CD4-positive, alpha-beta T cell (primary cell): ENCODE measurements at regions of chr2 and their contacts with region 1.

Region 1: DNA sequence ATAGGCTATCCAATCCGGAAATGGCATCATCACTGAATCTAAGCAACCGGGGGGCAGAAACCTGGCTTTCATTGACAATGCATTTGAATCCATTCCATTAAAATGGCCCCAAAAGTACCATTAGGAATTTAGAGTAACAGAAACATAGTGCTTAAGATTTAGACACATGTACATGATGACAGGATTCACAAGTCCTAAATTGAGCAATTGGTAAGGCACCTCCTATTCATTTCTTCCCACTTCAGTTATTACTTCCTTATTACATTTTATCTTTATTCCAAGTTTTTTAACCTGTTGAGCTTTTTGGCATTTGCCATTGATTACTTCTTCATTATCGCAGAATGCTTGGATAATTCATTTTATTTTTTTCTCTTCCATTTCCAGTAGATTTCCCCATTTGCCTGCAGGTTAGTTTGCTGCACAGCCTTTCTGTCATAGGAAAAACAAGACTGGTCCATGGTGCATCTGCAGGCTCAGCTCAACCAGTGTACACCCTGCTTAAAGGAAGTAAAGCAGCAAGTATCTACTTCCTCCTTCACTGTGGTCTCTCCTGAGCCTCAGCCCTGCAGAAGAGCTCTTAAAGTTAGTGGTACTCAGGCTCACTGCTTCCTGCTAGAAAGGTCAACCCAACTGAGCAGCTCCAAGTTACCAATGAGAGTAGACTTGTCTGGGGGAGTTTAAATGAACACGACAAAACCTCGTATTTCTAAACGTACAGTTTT is 89.2 kb downstream of the DOCK10 start:
- DNase-seq: peak in 13 of 14 experiments; percentile 17 to 81 (median 34)
- ATAC-seq: peak; percentile 95
- H3K4me3 ChIP-seq: no peak overlapping the region
- H3K4me3 Mint-ChIP-seq: peak overlapping the region; percentile 50
- H3K27ac ChIP-seq: peak overlapping the region; percentile 51 to 57
- H3K27ac Mint-ChIP-seq: peak overlapping the region; percentile 84
- H3K4me1 ChIP-seq: peaks cover 47% of the 10 kb centered on the region
- H3K4me1 Mint-ChIP-seq: peaks cover 88% of the 10 kb centered on the region
- H3K27me3 ChIP-seq: no peaks in the 10 kb centered on the region
- H3K27me3 Mint-ChIP-seq: no peaks in the 10 kb centered on the region
- CTCF ChIP-seq: no peak

Region 2: GRCh38 chr2:224217962-224218347 is 735.1 kb before region 1 on chr2:
- CTCF ChIA-PET with region 1: no interaction called
- POLR2A ChIA-PET with region 1: no interaction called
- intact Hi-C with region 1: no loop called
- DNase-seq: no peak
- ATAC-seq: no peak
- H3K4me3 ChIP-seq: no peak overlapping the region
- H3K4me3 Mint-ChIP-seq: no peak overlapping the region
- H3K27ac ChIP-seq: no peak overlapping the region
- H3K27ac Mint-ChIP-seq: no peak overlapping the region
- H3K4me1 ChIP-seq: no peaks in the 10 kb centered on the region
- H3K4me1 Mint-ChIP-seq: no peaks in the 10 kb centered on the region
- H3K27me3 ChIP-seq: peaks cover 2 to 3% of the 10 kb centered on the region in 2 experiments
- H3K27me3 Mint-ChIP-seq: peaks cover 10% of the 10 kb centered on the region
- CTCF ChIP-seq: no peak

Region 3: DNA sequence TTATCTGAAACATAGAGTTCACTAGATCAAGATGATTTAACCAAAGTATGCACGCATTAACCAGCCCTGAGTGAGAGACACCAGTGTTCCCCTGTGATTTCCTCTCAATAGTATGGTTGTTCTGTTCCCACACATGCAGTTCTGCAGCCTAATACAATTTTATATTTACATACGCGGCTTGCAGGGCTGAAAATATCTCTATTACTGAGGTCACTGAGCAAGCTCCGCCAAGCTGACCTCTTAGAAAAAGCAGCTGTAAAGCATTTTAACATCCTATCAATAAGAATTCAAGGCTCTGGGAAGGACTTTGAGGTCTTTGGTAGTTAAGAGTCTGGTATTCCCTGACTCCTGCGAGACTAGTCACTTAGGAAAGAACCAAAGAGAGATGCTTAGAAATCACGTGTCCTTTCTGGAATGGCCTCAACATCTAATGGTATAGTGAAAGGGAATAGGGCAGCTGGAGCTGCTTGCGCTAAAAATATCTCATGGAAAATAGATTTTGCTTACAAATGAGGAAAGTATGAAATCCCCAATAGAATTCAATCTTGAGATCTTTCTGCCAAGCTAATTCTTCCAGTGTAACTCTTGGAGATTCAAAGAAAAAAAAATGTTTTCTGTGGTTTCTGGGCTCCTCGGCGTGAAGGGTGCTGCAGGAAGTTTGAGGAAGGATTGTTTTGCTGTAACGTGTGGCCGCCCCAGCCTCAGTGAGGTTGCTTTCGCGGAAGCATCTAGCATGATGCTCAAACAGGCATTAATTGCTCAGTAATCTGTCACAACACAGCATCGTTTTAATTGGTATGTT is 30.0 kb after region 1 on chr2:
- CTCF ChIA-PET with region 1: interaction called, 3 read pairs
- POLR2A ChIA-PET with region 1: interaction called, 4 read pairs
- intact Hi-C with region 1: loop called in 1 of 2 experiments (anchors 5 kb)
- DNase-seq: peak in 13 of 14 experiments; percentile 12 to 70 (median 45)
- ATAC-seq: peak; percentile 66
- H3K4me3 ChIP-seq: peak overlapping the region; percentile 3
- H3K4me3 Mint-ChIP-seq: peak overlapping the region; percentile 67
- H3K27ac ChIP-seq: peak overlapping the region; percentile 13 to 60
- H3K27ac Mint-ChIP-seq: peak overlapping the region; percentile 84
- H3K4me1 ChIP-seq: peaks cover 51% of the 10 kb centered on the region
- H3K4me1 Mint-ChIP-seq: peaks cover 79% of the 10 kb centered on the region
- H3K27me3 ChIP-seq: no peaks in the 10 kb centered on the region
- H3K27me3 Mint-ChIP-seq: no peaks in the 10 kb centered on the region
- CTCF ChIP-seq: no peak

Region 4: DNA sequence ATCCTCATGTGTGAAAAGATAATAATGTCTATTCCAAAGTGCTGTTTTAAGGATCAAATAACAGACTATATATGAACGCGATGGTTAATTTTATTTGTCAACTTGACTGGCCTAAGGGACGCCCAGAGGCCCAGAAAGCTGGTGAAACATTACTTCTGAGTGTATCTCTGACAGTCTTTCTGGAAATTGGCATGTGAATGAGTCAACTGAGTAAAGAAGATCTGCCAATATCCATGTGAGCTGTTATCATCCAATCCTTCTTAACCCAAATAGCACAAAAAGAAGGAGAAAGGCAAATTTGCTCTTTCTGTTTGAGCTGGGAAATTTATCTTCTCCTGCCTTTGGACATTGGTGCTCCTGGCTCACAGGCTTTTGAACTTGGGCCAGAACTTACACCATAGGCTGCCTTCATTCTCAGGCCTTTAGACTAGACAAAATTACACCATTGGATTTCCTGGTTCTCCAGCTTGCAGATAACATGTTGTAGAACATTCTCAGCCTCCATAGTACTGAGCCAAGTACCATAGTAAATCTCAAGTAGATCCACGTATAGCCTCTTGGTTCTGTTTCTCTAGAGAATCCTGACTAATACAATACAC is 203.9 kb after region 1 on chr2:
- CTCF ChIA-PET with region 1: no interaction called
- POLR2A ChIA-PET with region 1: no interaction called
- intact Hi-C with region 1: no loop called
- DNase-seq: no peak
- ATAC-seq: no peak
- H3K4me3 ChIP-seq: no peak overlapping the region
- H3K4me3 Mint-ChIP-seq: no peak overlapping the region
- H3K27ac ChIP-seq: no peak overlapping the region
- H3K27ac Mint-ChIP-seq: no peak overlapping the region
- H3K4me1 ChIP-seq: no peaks in the 10 kb centered on the region
- H3K4me1 Mint-ChIP-seq: no peaks in the 10 kb centered on the region
- H3K27me3 ChIP-seq: no peaks in the 10 kb centered on the region
- H3K27me3 Mint-ChIP-seq: no peaks in the 10 kb centered on the region
- CTCF ChIP-seq: no peak